Lower leg skin (tissue), 4 donors: ENCODE measurements at regions of chr11 and their contacts with region 1.

Region 1: GRCh38 chr11:129785383-129786111 is 30.1 kb upstream of the TMEM45B start:
- DNase-seq: no peak
- H3K4me3 ChIP-seq: no peak overlapping the region
- CTCF ChIP-seq: no peak
- POLR2A ChIP-seq: no peak

Region 2: DNA sequence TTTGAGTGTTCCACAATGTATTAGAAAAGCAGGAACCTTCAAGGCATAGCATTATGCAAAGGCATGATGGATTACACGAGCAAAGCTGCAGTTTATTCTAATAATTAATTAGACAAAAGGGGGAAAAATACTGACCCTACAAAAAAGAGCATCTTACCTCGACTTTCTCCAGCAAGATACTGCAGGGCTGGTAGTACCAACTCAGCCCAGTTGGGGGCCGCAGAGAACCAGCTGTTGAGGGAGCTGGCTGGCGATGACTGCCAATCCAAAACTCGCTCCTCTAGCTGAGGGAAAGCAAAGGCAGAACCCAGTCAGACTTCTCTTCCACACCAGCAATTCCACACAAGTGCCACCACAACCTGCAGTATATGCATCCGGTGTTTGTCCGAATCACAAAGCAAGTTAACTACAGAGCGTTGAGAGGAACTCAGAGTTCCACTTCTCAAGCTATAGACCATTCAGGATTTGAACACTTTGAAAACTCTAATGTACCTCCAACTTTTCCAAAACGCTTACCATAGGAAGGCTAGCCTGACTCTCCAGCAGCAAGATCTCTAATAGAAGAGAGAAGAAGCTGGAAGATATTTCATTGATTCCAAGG is 96.1 kb after region 1 on chr11:
- intact Hi-C with region 1: loop called (anchors 10 kb)
- DNase-seq: no peak
- H3K4me3 ChIP-seq: no peak overlapping the region
- CTCF ChIP-seq: no peak
- POLR2A ChIP-seq: no peak

Region 3: GRCh38 chr11:129905402-129905801 is 119.9 kb after region 1 on chr11:
- intact Hi-C with region 1: no loop called
- DNase-seq: no peak
- H3K4me3 ChIP-seq: no peak overlapping the region
- CTCF ChIP-seq: no peak
- POLR2A ChIP-seq: no peak